ENCODE measurements at regions of chr12 and their contacts with region 1.

Region 1: DNA sequence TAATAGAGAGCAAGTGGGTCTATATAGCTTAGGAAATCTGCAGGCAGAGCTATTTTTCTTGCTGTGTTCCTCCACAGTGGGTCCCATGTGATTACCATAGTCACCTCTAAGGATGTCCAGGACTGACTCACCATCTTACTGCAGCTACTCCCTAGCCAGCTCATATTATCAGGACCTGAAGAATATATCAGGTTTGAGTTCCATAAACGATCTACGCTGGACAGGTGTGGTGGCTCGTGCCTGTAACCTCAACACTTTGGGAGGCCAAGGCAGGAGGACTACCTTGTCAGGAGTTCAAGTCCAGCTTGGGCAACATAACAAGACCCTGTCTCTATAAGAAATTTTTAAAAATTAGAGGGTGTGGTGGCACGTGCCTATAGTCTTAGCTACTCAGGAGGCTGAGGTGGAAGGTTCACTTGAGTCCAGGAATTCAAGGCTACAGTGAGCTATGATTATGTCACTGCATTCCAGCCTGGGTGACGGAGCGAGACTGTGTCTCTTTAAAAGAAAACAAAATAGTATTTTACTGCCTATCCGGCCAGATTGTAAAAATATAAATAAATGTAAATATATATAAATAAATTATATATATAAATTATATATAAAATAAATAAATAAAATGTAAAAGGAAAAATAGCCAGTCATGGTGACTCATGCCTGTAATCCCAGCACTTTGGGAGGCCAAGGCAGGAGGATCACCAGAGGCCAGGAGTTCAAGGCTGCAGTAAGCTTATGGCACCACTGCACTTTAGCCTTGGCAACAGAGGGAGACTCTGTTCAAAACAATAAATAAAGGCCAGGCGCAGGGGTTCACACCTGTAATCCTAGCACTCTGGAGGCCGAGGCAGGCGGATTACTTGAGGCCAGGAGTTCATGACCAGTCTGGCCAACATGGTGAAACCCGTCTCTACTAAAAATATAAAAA is 6.9 kb upstream of the SPRYD4 start:
- DNase-seq: no peak
- H3K4me3 Mint-ChIP-seq: no peak overlapping the region
- H3K27ac Mint-ChIP-seq: no peak overlapping the region
- H3K4me1 Mint-ChIP-seq: peaks cover 7% of the 10 kb centered on the region
- H3K27me3 Mint-ChIP-seq: peaks cover 4% of the 10 kb centered on the region

Region 2: GRCh38 chr12:56258057-56258819 is 203.3 kb before region 1 on chr12 and contains the start of gene ANKRD52:
- CTCF ChIA-PET with region 1: interaction called, 11 read pairs
- DNase-seq: peak; percentile 84
- H3K4me3 Mint-ChIP-seq: peak within 1 kb of the TSS; percentile 82
- H3K27ac Mint-ChIP-seq: peak within 1 kb of the TSS; percentile 85
- H3K4me1 Mint-ChIP-seq: peaks cover 19% of the 10 kb centered on the region
- H3K27me3 Mint-ChIP-seq: peaks cover 5% of the 10 kb centered on the region

Region 3: GRCh38 chr12:56359851-56360767 is 101.4 kb before region 1 on chr12 and contains the start of gene STAT2:
- CTCF ChIA-PET with region 1: interaction called, 21 read pairs
- DNase-seq: peak; percentile 100
- H3K4me3 Mint-ChIP-seq: peak within 1 kb of the TSS; percentile 94
- H3K27ac Mint-ChIP-seq: peak within 1 kb of the TSS; percentile 98
- H3K4me1 Mint-ChIP-seq: peaks cover 32% of the 10 kb centered on the region
- H3K27me3 Mint-ChIP-seq: peaks cover 8% of the 10 kb centered on the region

Region 4: DNA sequence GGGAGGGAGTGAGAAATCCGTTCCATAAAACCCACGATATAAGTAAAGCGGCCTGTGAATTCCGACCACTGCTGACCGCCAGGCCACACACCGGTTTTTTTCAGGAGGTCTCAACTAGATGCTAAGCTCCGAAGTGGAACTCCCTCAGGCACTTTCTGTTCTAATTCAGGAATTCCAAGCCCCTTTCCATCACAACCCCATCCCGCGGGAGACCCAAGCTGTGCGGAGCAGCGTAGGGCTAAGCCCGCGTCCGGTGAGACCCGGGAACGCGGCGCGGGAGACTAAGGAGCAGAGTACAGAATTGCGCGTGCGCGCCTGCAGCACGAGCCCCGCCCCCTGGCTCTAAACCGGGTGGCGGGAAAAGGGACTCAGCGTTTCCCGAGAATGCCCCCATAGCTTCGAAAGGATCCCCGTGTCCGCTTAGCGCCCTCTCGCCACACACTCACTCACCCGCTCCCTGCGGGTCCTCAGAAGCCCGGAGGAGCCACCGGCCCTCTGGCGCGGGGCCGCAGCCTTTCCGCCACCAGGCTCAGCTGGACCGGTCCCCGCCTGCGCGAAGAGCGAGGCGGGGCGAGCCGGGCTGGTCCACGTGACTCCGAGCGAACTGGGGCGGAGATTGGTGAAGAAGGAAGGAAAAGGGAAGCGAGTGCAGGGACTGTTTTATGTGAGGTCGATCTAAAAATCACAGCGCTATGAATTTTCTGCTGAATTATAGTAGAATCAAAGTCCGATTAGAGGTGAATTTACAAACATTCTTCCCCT is 12.5 kb before region 1 on chr12 and contains the start of gene TIMELESS:
- CTCF ChIA-PET with region 1: interaction called, 11 read pairs
- DNase-seq: peak; percentile 90
- H3K4me3 Mint-ChIP-seq: peak within 1 kb of the TSS; percentile 84
- H3K27ac Mint-ChIP-seq: peak within 1 kb of the TSS; percentile 83
- H3K4me1 Mint-ChIP-seq: peaks cover 27% of the 10 kb centered on the region
- H3K27me3 Mint-ChIP-seq: peaks cover 13% of the 10 kb centered on the region

Region 5: DNA sequence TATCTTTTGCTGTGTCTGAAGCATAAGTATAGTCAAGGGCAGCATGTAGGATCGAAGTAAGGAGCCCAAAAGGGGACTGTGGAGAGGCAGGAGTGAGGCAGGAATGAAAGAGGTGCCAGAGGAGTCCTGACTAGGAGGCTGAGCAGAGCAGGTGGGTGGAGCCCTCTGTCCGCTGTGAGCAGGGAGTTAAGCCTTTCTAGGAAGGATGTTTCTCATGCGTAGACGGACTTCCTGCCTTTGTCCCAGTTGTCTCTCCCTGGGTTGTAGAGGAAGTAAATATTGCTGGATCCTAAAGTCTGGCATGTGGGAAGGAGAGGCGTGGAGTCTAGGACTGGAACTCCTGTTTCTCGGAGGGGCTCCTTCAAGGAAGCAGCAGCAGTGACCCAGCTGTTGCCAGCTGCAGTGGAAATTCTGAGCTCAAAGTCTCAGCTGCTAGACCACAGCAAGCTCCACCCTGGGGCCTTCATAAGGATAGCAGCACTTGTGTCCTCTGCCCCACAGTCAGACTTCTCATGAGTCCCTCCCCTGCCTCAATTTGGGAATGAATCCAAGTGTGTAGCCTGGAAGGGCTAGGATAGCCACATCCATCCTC is 104.1 kb after region 1 on chr12:
- CTCF ChIA-PET with region 1: no interaction called
- DNase-seq: peak; percentile 46
- H3K4me3 Mint-ChIP-seq: peak overlapping the region; percentile 6
- H3K27ac Mint-ChIP-seq: peak overlapping the region; percentile 53
- H3K4me1 Mint-ChIP-seq: peaks cover 28% of the 10 kb centered on the region
- H3K27me3 Mint-ChIP-seq: peaks cover 9% of the 10 kb centered on the region